ENCODE measurements at regions of chr11 and their contacts with region 1.

Region 1: GRCh38 chr11:73876424-73877300 is at the starts of genes COA4 and PAAF1:
- DNase-seq: peak; percentile 98
- H3K4me3 Mint-ChIP-seq: peak within 1 kb of the TSS; percentile 94
- H3K27ac Mint-ChIP-seq: peak within 1 kb of the TSS; percentile 92
- H3K4me1 Mint-ChIP-seq: peaks cover 12% of the 10 kb centered on the region
- H3K27me3 Mint-ChIP-seq: no peaks in the 10 kb centered on the region
- CTCF ChIP-seq: no peak
- total RNA-seq, gene COA4: 87.1 and 103 TPM in 2 replicates
- total RNA-seq, gene PAAF1: 21.6 and 26.4 TPM in 2 replicates

Region 2: GRCh38 chr11:72683782-72684200 is 1192.9 kb before region 1 on chr11:
- CTCF ChIA-PET with region 1: no interaction called
- POLR2A ChIA-PET with region 1: no interaction called
- intact Hi-C with region 1: no loop called
- DNase-seq: peak; percentile 46
- H3K4me3 Mint-ChIP-seq: no peak overlapping the region
- H3K27ac Mint-ChIP-seq: no peak overlapping the region
- H3K4me1 Mint-ChIP-seq: no peaks in the 10 kb centered on the region
- H3K27me3 Mint-ChIP-seq: peaks cover 14% of the 10 kb centered on the region
- CTCF ChIP-seq: peak; percentile 92

Region 3: GRCh38 chr11:73866586-73866996 is 10.1 kb before region 1 on chr11:
- CTCF ChIA-PET with region 1: no interaction called
- POLR2A ChIA-PET with region 1: interaction called, 37 read pairs
- intact Hi-C with region 1: no loop called
- DNase-seq: peak; percentile 75
- H3K4me3 Mint-ChIP-seq: no peak overlapping the region
- H3K27ac Mint-ChIP-seq: no peak overlapping the region
- H3K4me1 Mint-ChIP-seq: peaks cover 13% of the 10 kb centered on the region
- H3K27me3 Mint-ChIP-seq: no peaks in the 10 kb centered on the region
- CTCF ChIP-seq: no peak

Region 4: GRCh38 chr11:73889019-73889418 is 12.4 kb after region 1 on chr11:
- CTCF ChIA-PET with region 1: no interaction called
- POLR2A ChIA-PET with region 1: interaction called, 24 read pairs
- intact Hi-C with region 1: no loop called
- DNase-seq: peak; percentile 34
- H3K4me3 Mint-ChIP-seq: no peak overlapping the region
- H3K27ac Mint-ChIP-seq: no peak overlapping the region
- H3K4me1 Mint-ChIP-seq: peaks cover 6% of the 10 kb centered on the region
- H3K27me3 Mint-ChIP-seq: no peaks in the 10 kb centered on the region
- CTCF ChIP-seq: no peak

Region 5: DNA sequence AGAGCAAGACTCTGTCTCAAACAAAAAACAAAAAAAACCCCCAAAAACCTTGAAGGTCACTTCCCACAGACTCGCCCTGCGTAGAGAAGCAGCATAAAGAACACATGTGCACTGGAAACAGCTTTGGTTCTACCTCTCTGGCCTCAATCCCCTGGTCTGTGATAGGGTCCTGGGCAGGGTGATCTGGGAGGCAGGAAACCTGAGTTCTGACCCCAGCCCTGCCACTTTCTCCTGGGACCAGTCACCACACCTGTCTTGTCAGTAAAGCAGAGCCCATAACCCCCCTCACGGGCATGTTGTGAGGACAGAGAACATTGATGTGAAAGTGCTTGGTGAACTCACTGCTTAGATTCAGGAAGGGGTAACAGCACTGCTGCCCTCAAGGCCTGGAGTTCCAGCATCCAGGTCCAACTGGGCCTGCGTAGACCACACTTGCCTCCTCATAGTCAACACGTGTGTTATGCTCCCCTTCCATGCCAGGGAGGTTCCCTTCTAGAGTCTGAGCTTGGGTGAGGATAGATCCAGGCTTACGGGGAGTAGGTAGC is 94.6 kb after region 1 on chr11:
- CTCF ChIA-PET with region 1: no interaction called
- POLR2A ChIA-PET with region 1: no interaction called
- intact Hi-C with region 1: no loop called
- DNase-seq: no peak
- H3K4me3 Mint-ChIP-seq: no peak overlapping the region
- H3K27ac Mint-ChIP-seq: no peak overlapping the region
- H3K4me1 Mint-ChIP-seq: peaks cover 11% of the 10 kb centered on the region
- H3K27me3 Mint-ChIP-seq: no peaks in the 10 kb centered on the region
- CTCF ChIP-seq: no peak